ENCODE measurements at regions of chr4 and their contacts with region 1.

Region 1: DNA sequence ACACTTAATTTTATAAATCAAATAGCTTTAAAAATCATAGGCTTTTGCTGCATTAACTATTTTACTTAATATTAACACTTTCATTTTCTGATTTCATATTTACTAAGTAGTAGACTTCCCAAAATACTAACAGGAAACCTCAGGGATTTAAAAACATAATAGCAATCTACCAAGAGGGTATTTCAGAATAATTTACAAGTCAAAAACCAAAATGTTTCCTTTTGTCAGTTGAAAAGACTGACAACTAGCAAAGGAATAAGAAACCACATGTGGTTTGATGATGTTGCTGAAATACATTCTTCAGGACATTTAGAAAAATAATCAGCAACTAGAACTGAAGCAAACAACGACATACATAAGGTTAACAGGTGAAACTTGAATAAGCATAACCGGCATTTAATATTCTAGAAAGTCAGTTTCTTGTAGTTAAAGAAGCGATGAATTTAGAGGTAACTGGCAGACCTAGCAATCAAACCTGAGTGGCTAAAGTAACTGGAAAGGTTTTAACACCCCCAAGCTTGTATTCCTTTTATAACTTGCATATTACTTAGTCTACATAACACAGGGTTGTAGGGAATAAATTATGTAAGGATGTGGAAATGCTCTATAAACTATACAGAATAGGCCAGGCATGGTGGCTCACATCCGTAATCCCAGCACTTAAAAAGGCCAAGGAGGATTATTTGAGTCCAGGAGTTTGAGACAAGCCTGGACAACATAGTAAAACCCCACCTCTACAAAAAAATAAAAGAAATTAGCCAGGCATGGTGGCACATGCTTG is 40.0 kb downstream of the DHX15 start:
- DNase-seq: no peak
- ATAC-seq: no peak; the same call in 1 of the 3 replicates
- H3K4me3 ChIP-seq: no peak overlapping the region
- H3K27ac ChIP-seq: peak overlapping the region; percentile 15; the same call in 1 of the 2 replicates
- H3K4me1 ChIP-seq: peaks cover 10% of the 10 kb centered on the region
- H3K27me3 ChIP-seq: no peaks in the 10 kb centered on the region
- CTCF ChIP-seq: no peak
- EP300 ChIP-seq: no peak
- POLR2A ChIP-seq: no peak
- RAD21 ChIP-seq: no peak

Region 2: GRCh38 chr4:24578364-24578763 is 34.0 kb after region 1 on chr4:
- CTCF ChIA-PET with region 1: interaction called, 5 read pairs
- POLR2A ChIA-PET with region 1: no interaction called
- RAD21 ChIA-PET with region 1: no interaction called
- SMC1A ChIA-PET with region 1: no interaction called
- in situ Hi-C with region 1: no loop called
- intact Hi-C with region 1: loop called (anchors 5 kb)
- DNase-seq: no peak
- ATAC-seq: peak; percentile 31
- H3K4me3 ChIP-seq: peak overlapping the region; percentile 48; the same call in 1 of the 2 replicates
- H3K27ac ChIP-seq: no peak overlapping the region
- H3K4me1 ChIP-seq: no peaks in the 10 kb centered on the region
- H3K27me3 ChIP-seq: no peaks in the 10 kb centered on the region
- CTCF ChIP-seq: no peak
- EP300 ChIP-seq: no peak
- POLR2A ChIP-seq: no peak
- RAD21 ChIP-seq: no peak